CD8-positive, alpha-beta T cell (primary cell): ENCODE measurements at regions of chr1 and their contacts with region 1.

Region 1: GRCh38 chr1:24930204-24931145 is at the start of gene RUNX3:
- DNase-seq: peak; percentile 87 to 98 (median 94)
- ATAC-seq: peak; percentile 77
- H3K4me3 ChIP-seq: peak within 1 kb of the TSS; percentile 89 to 97
- H3K4me3 Mint-ChIP-seq: peak within 1 kb of the TSS; percentile 93
- H3K27ac ChIP-seq: peak within 1 kb of the TSS; percentile 95 to 96
- H3K27ac Mint-ChIP-seq: peak within 1 kb of the TSS; percentile 99
- H3K4me1 ChIP-seq: peaks cover 49% of the 10 kb centered on the region
- H3K4me1 Mint-ChIP-seq: peaks cover 50% of the 10 kb centered on the region
- H3K27me3 ChIP-seq: no peaks in the 10 kb centered on the region
- H3K27me3 Mint-ChIP-seq: no peaks in the 10 kb centered on the region
- CTCF ChIP-seq: no peak
- total RNA-seq, gene RUNX3: 423 to 424 TPM

Region 2: DNA sequence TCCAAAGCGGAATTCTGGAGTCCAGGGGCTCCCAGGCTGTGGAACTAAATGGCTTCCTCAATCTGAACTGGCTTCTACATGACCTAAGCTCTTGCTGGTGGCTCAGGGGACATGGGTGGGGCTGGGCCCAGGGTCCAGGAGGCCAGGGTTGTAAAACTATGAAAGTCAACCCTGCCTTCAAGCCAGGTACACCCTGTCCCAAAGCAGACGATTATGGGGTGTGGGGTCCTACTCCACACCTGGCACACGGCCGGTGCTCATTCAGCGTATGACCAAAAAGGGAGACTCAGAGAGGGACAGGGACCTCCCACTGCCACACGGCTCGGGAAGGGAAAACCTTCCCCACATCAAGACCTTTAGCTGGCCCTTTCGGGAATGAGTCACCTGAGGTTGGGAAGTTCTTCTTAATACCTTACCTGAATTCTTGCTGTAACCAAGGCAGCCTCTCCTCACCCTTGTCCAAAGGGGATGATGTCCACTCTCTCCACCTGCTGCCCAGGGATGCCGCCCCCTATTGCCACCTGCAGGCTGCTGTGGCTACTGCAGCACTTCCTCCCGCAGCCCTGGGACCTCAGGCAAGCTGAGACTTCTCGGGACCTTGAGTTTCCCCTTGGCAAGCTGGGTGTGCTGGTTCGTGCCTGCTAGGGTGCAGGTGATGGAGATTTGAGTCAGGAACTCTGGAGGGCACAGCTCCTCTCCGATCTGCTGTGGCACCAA is 32.5 kb before region 1 on chr1:
- CTCF ChIA-PET with region 1: interaction called, 5 read pairs
- POLR2A ChIA-PET with region 1: interaction called, 13 read pairs
- intact Hi-C with region 1: no loop called
- DNase-seq: peak in 7 of 9 experiments; percentile 35 to 75 (median 57)
- ATAC-seq: peak; percentile 52
- H3K4me3 ChIP-seq: no peak overlapping the region
- H3K4me3 Mint-ChIP-seq: no peak overlapping the region
- H3K27ac ChIP-seq: no peak overlapping the region
- H3K27ac Mint-ChIP-seq: peak overlapping the region; percentile 58
- H3K4me1 ChIP-seq: peaks cover 24% of the 10 kb centered on the region
- H3K4me1 Mint-ChIP-seq: peaks cover 36% of the 10 kb centered on the region
- H3K27me3 ChIP-seq: no peaks in the 10 kb centered on the region
- H3K27me3 Mint-ChIP-seq: no peaks in the 10 kb centered on the region
- CTCF ChIP-seq: peak; percentile 72

Region 3: DNA sequence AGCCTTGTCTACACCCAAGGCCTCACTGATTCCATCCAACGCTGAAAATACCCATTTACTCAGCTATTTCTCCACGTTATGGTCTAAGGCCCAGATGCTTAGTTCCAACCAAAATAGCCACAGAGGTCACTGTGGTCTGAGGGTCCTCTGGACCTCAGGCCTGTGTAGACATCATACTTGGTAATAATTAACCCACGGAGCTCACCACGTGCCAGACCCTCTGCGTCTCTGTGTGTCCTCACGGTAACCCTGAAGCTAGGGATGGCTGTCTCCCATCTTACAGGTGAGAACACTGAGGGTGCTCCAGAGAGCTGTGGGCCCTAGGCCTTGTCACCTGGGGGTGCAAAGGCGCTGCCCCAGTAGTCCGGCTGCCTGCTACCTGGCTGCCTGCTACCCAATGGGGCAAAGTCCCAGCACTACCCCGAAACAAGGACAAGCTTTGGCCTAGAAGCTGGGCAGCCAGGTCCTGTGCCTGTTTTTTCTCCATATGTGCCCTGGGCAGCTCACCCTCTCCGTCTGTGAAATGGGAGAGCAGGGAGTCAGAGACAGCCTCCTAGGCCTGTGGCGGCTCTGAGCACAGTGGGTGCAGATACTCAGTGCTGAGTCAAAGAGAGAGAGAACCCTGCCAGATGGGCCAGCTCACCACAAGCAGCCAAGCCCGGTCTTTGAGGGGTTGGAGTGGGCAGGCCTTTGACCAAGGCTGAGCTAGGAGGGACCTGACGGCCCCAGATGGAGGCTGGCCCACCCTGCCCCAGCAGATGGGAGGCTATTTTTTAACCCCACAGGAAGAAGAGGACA is 16.6 kb after region 1 on chr1:
- CTCF ChIA-PET with region 1: interaction called, 16 read pairs
- POLR2A ChIA-PET with region 1: interaction called, 9 read pairs
- intact Hi-C with region 1: no loop called
- DNase-seq: no peak
- ATAC-seq: no peak
- H3K4me3 ChIP-seq: no peak overlapping the region
- H3K4me3 Mint-ChIP-seq: no peak overlapping the region
- H3K27ac ChIP-seq: no peak overlapping the region
- H3K27ac Mint-ChIP-seq: peak overlapping the region; percentile 41
- H3K4me1 ChIP-seq: peaks cover 14% of the 10 kb centered on the region
- H3K4me1 Mint-ChIP-seq: peaks cover 59% of the 10 kb centered on the region
- H3K27me3 ChIP-seq: no peaks in the 10 kb centered on the region
- H3K27me3 Mint-ChIP-seq: no peaks in the 10 kb centered on the region
- CTCF ChIP-seq: no peak

Region 4: GRCh38 chr1:24970399-24970753 is 39.9 kb after region 1 on chr1:
- CTCF ChIA-PET with region 1: interaction called, 111 read pairs
- POLR2A ChIA-PET with region 1: interaction called, 23 read pairs
- intact Hi-C with region 1: loop called (anchors 1 kb)
- DNase-seq: peak in 1 of 9 experiments; percentile 11
- ATAC-seq: no peak
- H3K4me3 ChIP-seq: peak overlapping the region in 1 of 2 experiments; percentile 20
- H3K4me3 Mint-ChIP-seq: peak overlapping the region; percentile 35
- H3K27ac ChIP-seq: peak overlapping the region in 1 of 2 experiments; percentile 23
- H3K27ac Mint-ChIP-seq: peak overlapping the region; percentile 95
- H3K4me1 ChIP-seq: peaks cover 66% of the 10 kb centered on the region
- H3K4me1 Mint-ChIP-seq: peaks cover 65% of the 10 kb centered on the region
- H3K27me3 ChIP-seq: peaks cover 0 to 2% of the 10 kb centered on the region in 2 experiments
- H3K27me3 Mint-ChIP-seq: no peaks in the 10 kb centered on the region
- CTCF ChIP-seq: no peak

Region 5: GRCh38 chr1:25031966-25032667 is 101.6 kb after region 1 on chr1:
- CTCF ChIA-PET with region 1: interaction called, 67 read pairs
- POLR2A ChIA-PET with region 1: interaction called, 16 read pairs
- intact Hi-C with region 1: loop called (anchors 1 kb)
- DNase-seq: peak in 8 of 9 experiments; percentile 36 to 94 (median 66)
- ATAC-seq: peak; percentile 60
- H3K4me3 ChIP-seq: no peak overlapping the region
- H3K4me3 Mint-ChIP-seq: peak overlapping the region; percentile 50
- H3K27ac ChIP-seq: peak overlapping the region; percentile 32 to 95
- H3K27ac Mint-ChIP-seq: peak overlapping the region; percentile 97
- H3K4me1 ChIP-seq: peaks cover 99% of the 10 kb centered on the region
- H3K4me1 Mint-ChIP-seq: peaks cover 77% of the 10 kb centered on the region
- H3K27me3 ChIP-seq: no peaks in the 10 kb centered on the region
- H3K27me3 Mint-ChIP-seq: no peaks in the 10 kb centered on the region
- CTCF ChIP-seq: peak; percentile 42

Region 6: DNA sequence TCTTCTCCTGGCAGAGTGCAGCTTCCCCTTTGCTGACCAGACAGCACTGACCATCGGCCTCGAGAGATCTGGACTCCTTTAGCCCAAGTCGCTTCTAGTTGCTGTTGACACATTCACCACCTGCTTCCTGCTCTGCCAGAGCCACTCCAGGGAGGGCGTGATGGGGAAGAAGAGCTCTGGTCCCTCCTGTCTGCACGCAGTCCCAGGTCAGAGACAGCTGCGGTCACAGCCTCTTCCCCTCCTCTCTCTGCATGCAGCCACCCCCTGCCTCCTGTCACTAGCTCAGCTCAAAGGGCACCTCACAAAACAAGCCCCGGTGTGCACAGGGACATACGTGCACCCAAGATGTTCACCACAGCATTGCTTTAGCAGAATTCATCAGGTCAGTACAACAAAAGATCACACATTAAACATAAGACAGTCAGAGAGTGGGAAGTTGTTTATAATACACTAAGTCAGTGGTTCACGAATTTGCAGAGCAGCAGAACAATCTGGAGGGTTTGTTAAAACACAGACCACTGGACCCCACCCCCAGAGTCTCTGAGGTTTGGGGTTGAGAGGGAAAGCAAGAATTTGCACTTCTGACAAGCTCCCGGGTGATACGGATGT is 169.0 kb after region 1 on chr1:
- CTCF ChIA-PET with region 1: interaction called, 68 read pairs
- POLR2A ChIA-PET with region 1: interaction called, 23 read pairs
- intact Hi-C with region 1: loop called (anchors 1 kb)
- DNase-seq: peak; percentile 8 to 82 (median 52)
- ATAC-seq: peak; percentile 50
- H3K4me3 ChIP-seq: peak overlapping the region; percentile 21 to 32
- H3K4me3 Mint-ChIP-seq: peak overlapping the region; percentile 71
- H3K27ac ChIP-seq: peak overlapping the region; percentile 19 to 60
- H3K27ac Mint-ChIP-seq: peak overlapping the region; percentile 86
- H3K4me1 ChIP-seq: peaks cover 73% of the 10 kb centered on the region
- H3K4me1 Mint-ChIP-seq: peaks cover 74% of the 10 kb centered on the region
- H3K27me3 ChIP-seq: no peaks in the 10 kb centered on the region
- H3K27me3 Mint-ChIP-seq: no peaks in the 10 kb centered on the region
- CTCF ChIP-seq: no peak

Region 7: GRCh38 chr1:25247024-25247828 is 316.8 kb after region 1 on chr1 and contains the start of gene RSRP1:
- CTCF ChIA-PET with region 1: no interaction called
- POLR2A ChIA-PET with region 1: interaction called, 3 read pairs
- intact Hi-C with region 1: loop called in 1 of 2 experiments (anchors 5 kb)
- DNase-seq: peak; percentile 99 to 100 (median 100)
- ATAC-seq: peak; percentile 86
- H3K4me3 ChIP-seq: peak within 1 kb of the TSS; percentile 82
- H3K4me3 Mint-ChIP-seq: peak within 1 kb of the TSS; percentile 96
- H3K27ac ChIP-seq: peak within 1 kb of the TSS; percentile 97 to 99
- H3K27ac Mint-ChIP-seq: peak within 1 kb of the TSS; percentile 99
- H3K4me1 ChIP-seq: peaks cover 45% of the 10 kb centered on the region
- H3K4me1 Mint-ChIP-seq: peaks cover 43% of the 10 kb centered on the region
- H3K27me3 ChIP-seq: no peaks in the 10 kb centered on the region
- H3K27me3 Mint-ChIP-seq: no peaks in the 10 kb centered on the region
- CTCF ChIP-seq: no peak
- total RNA-seq, gene RSRP1: 472 to 482 TPM